ENCODE measurements at regions of chr3 and their contacts with region 1.

Region 1: DNA sequence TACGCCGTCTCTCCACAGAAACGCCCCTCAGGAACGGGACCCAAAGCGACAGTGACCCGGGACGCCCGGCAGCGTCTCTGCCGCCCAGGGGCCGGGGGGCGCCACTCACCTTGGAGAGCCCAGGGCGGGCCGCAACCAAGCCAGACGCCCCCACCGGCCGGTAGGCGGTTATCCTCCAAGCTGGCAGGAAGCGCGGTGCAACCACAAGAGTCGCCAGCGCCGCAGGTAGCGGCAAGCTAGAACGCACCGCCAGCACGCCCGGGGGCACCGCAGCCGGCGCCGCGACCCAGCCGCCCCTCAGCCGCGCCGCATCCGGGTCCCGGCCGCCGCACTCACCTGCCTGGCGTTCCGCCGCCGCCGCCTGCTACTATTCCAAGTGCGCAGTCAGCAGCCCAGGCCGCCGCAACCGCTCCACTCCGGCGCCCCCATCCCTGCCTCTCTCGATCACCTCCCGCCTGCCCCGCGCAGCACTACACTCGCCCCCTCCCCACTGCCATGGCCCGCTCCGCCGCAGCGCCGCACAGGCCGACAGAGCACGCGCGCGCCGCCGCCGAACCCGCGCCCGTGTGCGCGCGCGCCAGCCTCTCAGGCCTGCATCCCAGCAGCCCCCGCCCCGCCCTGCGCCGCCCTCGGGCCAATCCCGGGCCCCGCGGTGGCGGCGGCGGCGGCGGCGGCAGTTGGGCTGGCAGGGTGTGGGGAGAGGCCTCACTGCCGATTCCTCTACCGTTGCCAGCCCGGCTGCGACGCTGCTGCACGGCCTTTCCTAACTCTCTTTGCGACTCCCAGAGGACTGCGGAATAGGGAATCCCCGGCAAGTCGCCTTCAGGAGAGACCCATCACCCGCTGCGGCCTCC is at the start of gene PIK3CB:
- DNase-seq: peak; percentile 94
- H3K4me3 ChIP-seq: peak within 1 kb of the TSS; percentile 74 to 98 (median 96)
- H3K27ac ChIP-seq: peak within 1 kb of the TSS; percentile 90 to 97 (median 94)
- H3K4me1 ChIP-seq: peaks cover 11 to 29% (median 23%) of the 10 kb centered on the region in 4 donors
- H3K27me3 ChIP-seq: no peaks in the 10 kb centered on the region
- CTCF ChIP-seq: peak; percentile 13 to 42 (median 34)
- EP300 ChIP-seq: no peak
- POLR2A ChIP-seq: no peak
- total RNA-seq, gene PIK3CB: 32.1 to 42.7 (median 36.6) TPM

Region 2: DNA sequence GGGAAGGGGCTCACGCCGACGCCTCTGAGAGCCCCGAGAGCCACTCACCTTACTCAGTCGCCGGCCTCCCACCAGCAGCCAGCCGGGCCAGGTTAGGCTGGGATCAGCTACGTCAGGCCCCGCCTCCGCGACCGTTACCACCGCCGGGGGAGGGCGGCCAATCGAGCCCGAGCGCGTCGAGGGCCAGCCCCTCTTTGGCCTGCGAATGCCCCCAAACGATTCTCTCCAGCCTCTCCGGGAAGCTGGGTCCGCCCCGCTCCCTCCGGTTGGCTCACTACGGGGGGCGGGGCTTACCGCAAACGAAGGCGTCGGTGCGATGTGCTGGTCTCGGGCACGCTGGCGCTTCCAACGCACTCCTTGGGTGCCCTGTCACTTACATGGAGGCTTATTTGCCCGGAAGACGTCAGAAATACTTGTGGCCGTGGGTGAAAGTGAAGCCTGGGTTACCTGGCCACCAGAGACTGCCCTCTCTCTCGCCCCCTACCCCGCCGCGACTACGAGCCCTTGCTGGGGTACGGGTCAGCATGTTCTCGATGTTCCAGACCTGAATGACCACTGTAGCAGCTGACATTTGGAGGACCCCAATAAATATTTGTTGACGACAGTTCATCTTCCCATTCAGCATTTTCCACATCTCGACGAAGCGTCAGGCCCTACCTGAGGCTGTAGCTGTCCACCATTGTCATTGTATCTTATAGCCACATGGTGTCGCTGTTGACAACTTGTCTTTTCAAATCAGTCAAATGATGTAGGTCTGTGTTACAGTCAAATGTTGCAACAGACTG is 240.2 kb before region 1 on chr3 and contains the start of gene CEP70:
- intact Hi-C with region 1: loop called (anchors 10 kb)
- DNase-seq: peak; percentile 98
- H3K4me3 ChIP-seq: peak within 1 kb of the TSS; percentile 67 to 75 (median 70)
- H3K27ac ChIP-seq: peak within 1 kb of the TSS; percentile 89 to 98 (median 89)
- H3K4me1 ChIP-seq: peaks cover 5 to 18% (median 13%) of the 10 kb centered on the region in 4 donors
- H3K27me3 ChIP-seq: no peaks in the 10 kb centered on the region
- CTCF ChIP-seq: peak; percentile 83 to 92 (median 86)
- EP300 ChIP-seq: no peak
- POLR2A ChIP-seq: peak; percentile 82
- total RNA-seq, gene CEP70: 25.5 to 54.4 (median 39.0) TPM

Region 3: GRCh38 chr3:138673641-138674530 is 160.7 kb before region 1 on chr3:
- intact Hi-C with region 1: no loop called
- DNase-seq: no peak
- H3K4me3 ChIP-seq: no peak overlapping the region
- H3K27ac ChIP-seq: no peak overlapping the region
- H3K4me1 ChIP-seq: peaks cover 0 to 3% (median 0%) of the 10 kb centered on the region in 4 donors
- H3K27me3 ChIP-seq: no peaks in the 10 kb centered on the region
- CTCF ChIP-seq: no peak
- EP300 ChIP-seq: no peak
- POLR2A ChIP-seq: no peak

Region 4: DNA sequence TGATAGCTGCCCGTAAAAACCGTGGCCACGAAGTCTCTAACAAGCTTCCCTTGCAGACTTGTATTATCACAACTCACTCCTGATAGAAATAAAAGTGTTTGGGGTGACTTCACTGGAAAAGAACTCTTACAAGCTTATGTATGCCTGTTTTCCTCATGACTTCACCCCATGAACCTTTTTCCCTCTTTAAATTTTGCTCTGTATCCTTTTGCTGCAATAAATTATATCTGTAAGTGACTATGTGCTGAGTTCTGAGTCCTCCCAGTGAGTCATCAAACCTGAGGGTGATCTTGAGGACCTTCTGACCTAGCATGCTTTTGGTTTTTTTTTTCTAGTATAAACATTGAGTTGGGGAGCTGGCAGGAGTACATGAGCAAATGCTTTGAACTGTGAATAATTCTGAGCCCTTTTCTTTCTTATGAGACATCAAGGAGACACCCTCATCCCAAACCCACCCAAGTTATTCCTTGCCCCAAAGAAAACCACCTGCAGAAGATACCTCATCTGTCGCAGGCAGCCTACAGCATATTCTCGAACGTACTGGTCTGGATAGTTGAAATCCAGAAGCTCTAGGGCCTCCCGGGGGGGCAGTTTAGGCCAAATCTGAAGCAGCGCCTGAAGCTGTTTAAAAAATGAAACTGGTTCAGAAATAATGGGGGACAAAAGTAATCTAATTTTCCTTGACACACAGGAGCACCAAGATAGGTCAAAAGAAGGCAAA is 140.1 kb before region 1 on chr3:
- intact Hi-C with region 1: loop called (anchors 10 kb)
- DNase-seq: no peak
- H3K4me3 ChIP-seq: no peak overlapping the region
- H3K27ac ChIP-seq: no peak overlapping the region
- H3K4me1 ChIP-seq: peaks cover 0 to 9% (median 0%) of the 10 kb centered on the region in 4 donors
- H3K27me3 ChIP-seq: no peaks in the 10 kb centered on the region
- CTCF ChIP-seq: no peak
- EP300 ChIP-seq: no peak
- POLR2A ChIP-seq: no peak

Region 5: DNA sequence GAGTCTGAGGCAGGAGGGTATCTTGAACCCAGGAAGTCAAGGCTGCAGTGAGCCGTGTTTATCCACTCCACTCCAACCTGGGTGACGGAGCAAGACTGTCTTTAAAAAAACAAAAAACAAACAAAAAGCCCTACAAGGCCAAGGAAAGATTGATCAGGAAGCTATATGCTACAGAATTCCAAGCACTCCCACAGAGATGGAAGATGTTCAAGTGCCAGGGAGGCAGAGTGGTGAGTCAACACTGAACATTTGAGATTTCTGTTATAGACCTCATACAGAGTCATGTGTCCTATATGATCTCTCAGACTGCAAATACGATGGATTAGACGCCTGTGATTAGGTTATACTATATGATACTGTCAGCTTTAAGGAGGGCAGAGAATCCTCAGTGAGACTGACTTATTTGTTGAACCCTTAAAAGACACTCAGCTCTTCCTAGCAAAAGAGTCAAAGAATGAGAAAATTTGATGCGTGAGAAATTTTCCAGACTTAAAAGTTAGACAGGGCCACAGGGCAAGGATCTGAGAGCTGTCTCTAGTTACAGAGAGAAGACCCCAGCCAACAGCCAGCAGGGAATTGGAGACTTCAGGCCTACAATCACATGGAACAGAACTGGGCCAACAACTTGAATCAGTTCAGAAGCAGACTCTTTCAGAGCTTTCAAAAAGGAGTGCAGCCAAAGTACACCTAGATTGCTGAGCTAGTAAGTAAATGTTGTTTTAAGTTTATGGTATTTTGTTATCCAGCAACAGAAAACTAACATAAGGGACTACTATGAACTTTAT is 107.4 kb before region 1 on chr3:
- intact Hi-C with region 1: no loop called
- DNase-seq: no peak
- H3K4me3 ChIP-seq: no peak overlapping the region
- H3K27ac ChIP-seq: no peak overlapping the region
- H3K4me1 ChIP-seq: peaks cover 0 to 3% (median 0%) of the 10 kb centered on the region in 4 donors
- H3K27me3 ChIP-seq: no peaks in the 10 kb centered on the region
- CTCF ChIP-seq: no peak
- EP300 ChIP-seq: no peak
- POLR2A ChIP-seq: no peak

Region 6: GRCh38 chr3:138774529-138775253 is 59.9 kb before region 1 on chr3:
- intact Hi-C with region 1: loop called (anchors 10 kb)
- DNase-seq: no peak
- H3K4me3 ChIP-seq: no peak overlapping the region
- H3K27ac ChIP-seq: peak overlapping the region; percentile 53 to 64 (median 60)
- H3K4me1 ChIP-seq: peaks cover 21 to 30% (median 27%) of the 10 kb centered on the region in 4 donors
- H3K27me3 ChIP-seq: no peaks in the 10 kb centered on the region
- CTCF ChIP-seq: no peak
- EP300 ChIP-seq: no peak
- POLR2A ChIP-seq: no peak

Region 7: DNA sequence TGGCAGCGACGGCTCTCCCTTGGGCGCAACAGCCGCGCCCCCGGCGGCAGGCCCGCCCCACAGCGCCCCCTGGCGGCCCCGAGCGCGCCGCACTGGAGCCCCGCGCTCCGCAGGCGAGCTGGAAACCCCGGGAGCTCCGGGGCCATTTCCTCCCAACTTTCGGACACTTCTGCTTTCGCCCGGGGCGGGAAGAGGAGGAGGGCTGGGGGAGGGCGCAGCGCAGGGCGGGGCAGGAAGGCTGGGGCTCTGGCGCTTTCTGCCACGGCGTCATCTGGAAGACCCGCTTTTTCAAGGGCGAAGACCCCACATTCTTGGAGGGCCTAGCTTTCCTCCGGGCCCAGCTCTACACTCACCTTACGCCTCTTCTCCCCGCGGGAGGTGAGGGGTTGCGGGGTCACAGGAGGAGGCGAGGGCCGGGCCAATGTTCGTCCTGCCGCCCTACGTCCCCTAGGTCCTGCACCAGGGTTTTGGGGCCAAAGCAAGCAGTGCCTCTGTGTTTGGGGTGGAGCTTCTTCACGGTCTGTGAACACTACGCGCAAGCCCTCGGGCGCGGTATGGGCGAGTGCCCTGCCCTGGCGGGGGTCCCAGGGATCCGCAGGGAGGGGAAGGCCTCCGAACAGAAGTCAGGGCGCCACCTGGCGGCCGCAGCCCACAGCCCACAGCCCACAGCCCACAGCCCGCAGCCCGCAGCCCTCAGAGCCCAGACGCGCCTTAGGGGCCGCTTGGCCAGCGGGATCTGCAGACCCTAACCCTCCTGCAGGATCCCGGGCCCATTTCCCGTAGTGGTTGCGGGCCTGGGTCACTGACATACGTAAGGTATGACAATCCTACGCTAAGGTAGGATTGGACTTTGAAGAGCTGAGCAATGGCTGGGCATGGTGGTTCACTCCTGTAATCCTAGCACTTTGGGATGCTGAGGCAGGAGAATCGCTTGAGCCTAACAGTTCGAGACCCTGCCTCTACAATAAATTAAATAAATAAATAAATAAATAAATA is 81.2 kb after region 1 on chr3:
- intact Hi-C with region 1: loop called (anchors 2 kb)
- DNase-seq: peak; percentile 97
- H3K4me3 ChIP-seq: peak overlapping the region; percentile 61 to 88 (median 82)
- H3K27ac ChIP-seq: peak overlapping the region; percentile 87 to 96 (median 94)
- H3K4me1 ChIP-seq: peaks cover 0 to 20% (median 15%) of the 10 kb centered on the region in 4 donors
- H3K27me3 ChIP-seq: no peaks in the 10 kb centered on the region
- CTCF ChIP-seq: peak; percentile 84 to 90 (median 88)
- EP300 ChIP-seq: no peak
- POLR2A ChIP-seq: no peak

Measured in esophagus muscularis mucosa (tissue), 4 donors.